Thyroid gland (tissue), 4 donors: ENCODE measurements at regions of chr3 and their contacts with region 1.

Region 1: GRCh38 chr3:138329127-138329983 is at the start of gene NME9:
- DNase-seq: peak; percentile 95 to 97
- H3K4me3 ChIP-seq: peak within 1 kb of the TSS; percentile 30 to 66 (median 45)
- H3K27ac ChIP-seq: peak within 1 kb of the TSS; percentile 44 to 69 (median 55)
- H3K4me1 ChIP-seq: peaks cover 0 to 9% of the 10 kb centered on the region in 2 donors
- H3K27me3 ChIP-seq: no peaks in the 10 kb centered on the region
- CTCF ChIP-seq: peak; percentile 20 to 75 (median 40)
- POLR2A ChIP-seq: peak in 1 of 2 donors; percentile 50
- total RNA-seq, gene NME9: 1.3 to 2.7 (median 2.6) TPM in 3 of 4 donors, not detected in the other

Region 2: DNA sequence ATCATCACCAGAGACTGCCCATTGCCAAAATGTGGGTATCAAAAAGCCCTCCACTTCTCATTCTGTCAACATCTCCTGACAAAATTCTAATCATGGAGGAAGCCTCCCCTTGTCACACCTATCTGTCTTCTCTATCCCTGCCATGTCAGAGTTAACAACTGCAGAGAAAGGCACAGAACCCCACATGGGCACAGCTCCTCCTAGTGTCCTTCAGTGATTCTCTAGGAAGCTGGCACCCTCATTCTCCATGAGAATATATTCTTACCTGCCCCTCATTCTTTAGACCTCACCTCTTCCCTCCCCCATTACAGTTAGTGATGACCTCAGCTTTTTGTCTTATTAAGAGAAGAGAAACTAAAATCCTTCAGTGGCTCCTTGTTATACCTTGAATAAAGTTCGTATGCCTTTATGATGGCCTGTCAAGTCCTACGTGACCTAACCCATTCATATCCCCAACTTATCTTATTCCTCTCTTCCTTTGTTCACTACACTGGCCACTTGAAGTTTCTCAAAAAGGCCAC is 44.3 kb before region 1 on chr3:
- intact Hi-C with region 1: no loop called
- DNase-seq: no peak
- H3K4me3 ChIP-seq: no peak overlapping the region
- H3K27ac ChIP-seq: no peak overlapping the region
- H3K4me1 ChIP-seq: no peaks in the 10 kb centered on the region
- H3K27me3 ChIP-seq: no peaks in the 10 kb centered on the region
- CTCF ChIP-seq: no peak
- POLR2A ChIP-seq: no peak

Region 3: GRCh38 chr3:138408751-138409161 is 79.4 kb after region 1 on chr3:
- intact Hi-C with region 1: loop called (anchors 10 kb)
- DNase-seq: peak in 1 of 2 donors; percentile 6
- H3K4me3 ChIP-seq: no peak overlapping the region
- H3K27ac ChIP-seq: no peak overlapping the region
- H3K4me1 ChIP-seq: no peaks in the 10 kb centered on the region
- H3K27me3 ChIP-seq: no peaks in the 10 kb centered on the region
- CTCF ChIP-seq: no peak
- POLR2A ChIP-seq: no peak

Region 4: DNA sequence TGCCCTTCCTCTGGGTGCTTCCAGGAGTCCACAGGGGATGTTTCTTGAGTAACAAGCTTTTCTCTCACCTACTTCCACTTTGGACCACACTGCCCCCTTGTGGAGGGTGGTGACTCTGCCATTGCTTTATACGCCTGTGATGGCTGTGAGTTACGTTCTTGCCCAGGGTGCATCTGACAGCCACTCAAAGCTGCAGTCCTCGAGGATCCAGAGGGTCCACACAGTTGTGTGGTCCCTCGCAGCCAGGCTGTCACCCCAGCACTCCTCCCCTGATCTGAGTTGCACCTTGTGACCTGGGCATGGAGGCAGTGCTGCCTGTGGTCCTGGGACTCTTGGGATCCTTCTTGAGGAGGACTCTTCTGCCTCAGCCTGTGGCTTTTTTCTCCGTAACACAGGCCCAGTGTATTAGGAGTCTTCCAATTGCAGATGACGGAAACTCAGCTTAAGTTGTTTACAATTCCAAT is 594.2 kb after region 1 on chr3:
- intact Hi-C with region 1: loop called (anchors 10 kb)
- DNase-seq: peak; percentile 85 to 92
- H3K4me3 ChIP-seq: no peak overlapping the region
- H3K27ac ChIP-seq: no peak overlapping the region
- H3K4me1 ChIP-seq: peaks cover 6 to 20% of the 10 kb centered on the region in 2 donors
- H3K27me3 ChIP-seq: no peaks in the 10 kb centered on the region
- CTCF ChIP-seq: peak; percentile 78 to 89 (median 84)
- POLR2A ChIP-seq: no peak